Calu3 (cell line): ENCODE measurements at regions of chr3 and their contacts with region 1.

Region 1: DNA sequence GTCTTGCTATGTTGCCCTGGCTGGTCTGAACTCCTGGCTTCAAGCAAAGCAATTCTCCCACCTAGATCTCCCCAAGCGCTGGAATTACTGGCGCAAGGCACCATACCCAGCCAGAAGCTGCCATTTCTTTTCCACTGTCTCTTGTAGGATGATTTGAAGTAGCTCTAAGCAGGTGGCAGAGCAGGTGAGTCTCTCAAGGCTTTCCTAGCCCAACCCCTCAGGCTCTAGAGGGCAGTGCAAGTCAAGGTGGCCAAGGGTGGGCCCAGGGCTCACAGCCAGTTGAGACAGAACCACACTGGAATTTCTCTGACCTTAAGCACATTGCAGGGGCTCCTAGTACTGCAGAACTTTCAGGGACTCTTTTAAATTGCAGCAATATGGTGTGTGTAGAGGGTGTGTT is 15.6 kb upstream of the DAG1 start:
- DNase-seq: peak; percentile 75
- H3K4me3 Mint-ChIP-seq: no peak overlapping the region
- H3K27ac Mint-ChIP-seq: no peak overlapping the region
- H3K4me1 Mint-ChIP-seq: peaks cover 17% of the 10 kb centered on the region
- H3K27me3 Mint-ChIP-seq: no peaks in the 10 kb centered on the region
- CTCF ChIP-seq: peak; percentile 24

Region 2: DNA sequence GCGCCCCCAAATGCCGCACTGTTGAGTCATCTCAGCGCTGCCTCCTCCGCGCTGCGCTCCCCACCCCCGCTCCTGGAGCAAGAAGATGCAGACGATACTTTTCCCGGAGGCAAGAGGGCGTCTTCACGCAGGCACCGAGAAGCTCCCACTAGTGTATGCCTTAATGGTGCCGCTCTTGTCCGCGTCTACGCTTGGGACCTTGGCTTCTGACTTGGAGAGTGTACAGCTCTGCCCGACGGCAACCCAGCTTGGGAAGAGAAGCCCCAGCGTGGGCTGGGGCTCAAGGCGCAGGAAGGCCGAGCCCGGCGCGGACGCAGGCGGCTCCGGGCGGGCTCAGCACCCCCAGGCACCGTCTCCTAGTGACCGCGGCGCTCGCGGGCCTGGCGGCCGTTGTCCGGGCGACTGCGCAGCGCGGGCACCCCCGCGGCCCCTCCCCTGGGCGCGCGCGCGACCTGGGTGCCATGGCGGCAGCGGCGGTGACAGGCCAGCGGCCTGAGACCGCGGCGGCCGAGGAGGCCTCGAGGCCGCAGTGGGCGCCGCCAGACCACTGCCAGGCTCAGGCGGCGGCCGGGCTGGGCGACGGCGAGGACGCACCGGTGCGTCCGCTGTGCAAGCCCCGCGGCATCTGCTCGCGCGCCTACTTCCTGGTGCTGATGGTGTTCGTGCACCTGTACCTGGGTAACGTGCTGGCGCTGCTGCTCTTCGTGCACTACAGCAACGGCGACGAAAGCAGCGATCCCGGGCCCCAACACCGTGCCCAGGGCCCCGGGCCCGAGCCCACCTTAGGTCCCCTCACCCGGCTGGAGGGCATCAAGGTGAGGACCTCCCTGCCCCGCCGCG is 464.4 kb before region 1 on chr3 and contains the start of gene P4HTM:
- CTCF ChIA-PET with region 1: interaction called, 15 read pairs
- intact Hi-C with region 1: loop called (anchors 2 kb)
- DNase-seq: peak; percentile 84
- H3K4me3 Mint-ChIP-seq: peak within 1 kb of the TSS; percentile 96
- H3K27ac Mint-ChIP-seq: peak within 1 kb of the TSS; percentile 93
- H3K4me1 Mint-ChIP-seq: peaks cover 9% of the 10 kb centered on the region
- H3K27me3 Mint-ChIP-seq: no peaks in the 10 kb centered on the region
- CTCF ChIP-seq: no peak
- total RNA-seq, gene P4HTM: 63.0 and 72.0 TPM in 2 replicates

Region 3: GRCh38 chr3:49339945-49340800 is 114.3 kb before region 1 on chr3 and contains the start of gene USP4:
- CTCF ChIA-PET with region 1: interaction called, 33 read pairs
- intact Hi-C with region 1: loop called (anchors 1 kb)
- DNase-seq: peak; percentile 90
- H3K4me3 Mint-ChIP-seq: peak within 1 kb of the TSS; percentile 88
- H3K27ac Mint-ChIP-seq: peak within 1 kb of the TSS; percentile 84
- H3K4me1 Mint-ChIP-seq: peaks cover 6% of the 10 kb centered on the region
- H3K27me3 Mint-ChIP-seq: no peaks in the 10 kb centered on the region
- CTCF ChIP-seq: no peak
- total RNA-seq, gene USP4: 40.0 and 43.5 TPM in 2 replicates

Region 4: GRCh38 chr3:49411968-49412631 is 42.4 kb before region 1 on chr3 and contains the starts of genes RHOA and TCTA:
- CTCF ChIA-PET with region 1: interaction called, 20 read pairs
- intact Hi-C with region 1: loop called (anchors 1 kb)
- DNase-seq: peak; percentile 98
- H3K4me3 Mint-ChIP-seq: peak within 1 kb of the TSS; percentile 91
- H3K27ac Mint-ChIP-seq: peak within 1 kb of the TSS; percentile 100
- H3K4me1 Mint-ChIP-seq: peaks cover 35% of the 10 kb centered on the region
- H3K27me3 Mint-ChIP-seq: no peaks in the 10 kb centered on the region
- CTCF ChIP-seq: no peak
- total RNA-seq, gene RHOA: 313 and 352 TPM in 2 replicates
- total RNA-seq, gene TCTA: 33.6 and 35.6 TPM in 2 replicates

Region 5: GRCh38 chr3:49500732-49501609 is 46.5 kb after region 1 on chr3:
- CTCF ChIA-PET with region 1: interaction called, 11 read pairs
- intact Hi-C with region 1: no loop called
- DNase-seq: peak; percentile 74
- H3K4me3 Mint-ChIP-seq: peak overlapping the region; percentile 47
- H3K27ac Mint-ChIP-seq: peak overlapping the region; percentile 96
- H3K4me1 Mint-ChIP-seq: peaks cover 35% of the 10 kb centered on the region
- H3K27me3 Mint-ChIP-seq: no peaks in the 10 kb centered on the region
- CTCF ChIP-seq: no peak

Region 6: DNA sequence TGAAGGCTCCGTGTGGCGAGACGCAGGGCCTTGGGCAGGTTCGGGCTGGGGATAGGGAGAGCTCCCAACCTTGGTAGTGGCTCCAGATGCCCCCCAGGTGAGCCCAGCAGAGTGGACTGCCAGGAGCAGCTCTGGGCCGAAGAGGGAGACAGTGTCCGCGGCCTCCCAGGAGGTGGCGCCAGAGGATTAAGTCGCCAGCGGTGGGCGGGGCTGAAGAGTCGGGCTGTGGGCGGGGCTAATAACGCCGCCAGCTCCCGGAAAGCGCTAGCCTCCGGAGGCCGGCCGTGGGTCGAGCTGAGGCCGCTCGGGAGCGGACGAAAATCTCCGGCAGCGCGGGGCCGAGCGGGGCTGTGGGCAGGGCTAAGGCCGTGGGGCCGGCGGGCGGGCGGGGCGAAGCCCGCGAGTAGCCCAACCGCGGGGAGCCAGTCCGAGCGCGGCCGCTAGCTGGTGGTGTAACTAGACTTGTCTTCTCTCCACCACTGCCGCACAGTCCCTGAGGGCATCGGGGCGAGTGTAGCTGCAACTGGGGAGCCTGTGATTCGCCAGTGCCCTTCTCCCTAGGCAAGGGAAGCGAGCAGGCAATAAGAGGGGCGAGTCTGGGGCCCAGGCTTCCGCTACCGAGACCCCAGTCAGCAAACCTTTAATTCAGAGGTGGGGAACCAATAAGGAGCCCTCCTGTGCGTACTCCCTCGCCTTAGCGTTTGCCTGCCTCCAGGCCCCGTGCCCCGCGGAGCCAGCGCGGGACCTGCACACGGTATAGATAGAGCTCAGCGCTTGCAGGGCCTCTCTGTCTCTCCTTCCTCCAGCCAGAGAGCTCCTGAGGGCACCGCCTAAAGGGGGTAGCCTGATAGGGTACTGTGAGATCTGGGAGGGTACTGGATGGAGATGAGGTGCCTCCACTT is 85.5 kb after region 1 on chr3:
- CTCF ChIA-PET with region 1: interaction called, 14 read pairs
- intact Hi-C with region 1: no loop called
- DNase-seq: peak; percentile 95
- H3K4me3 Mint-ChIP-seq: peak overlapping the region; percentile 66
- H3K27ac Mint-ChIP-seq: no peak overlapping the region
- H3K4me1 Mint-ChIP-seq: no peaks in the 10 kb centered on the region
- H3K27me3 Mint-ChIP-seq: peaks cover 25% of the 10 kb centered on the region
- CTCF ChIP-seq: peak; percentile 64

Region 7: DNA sequence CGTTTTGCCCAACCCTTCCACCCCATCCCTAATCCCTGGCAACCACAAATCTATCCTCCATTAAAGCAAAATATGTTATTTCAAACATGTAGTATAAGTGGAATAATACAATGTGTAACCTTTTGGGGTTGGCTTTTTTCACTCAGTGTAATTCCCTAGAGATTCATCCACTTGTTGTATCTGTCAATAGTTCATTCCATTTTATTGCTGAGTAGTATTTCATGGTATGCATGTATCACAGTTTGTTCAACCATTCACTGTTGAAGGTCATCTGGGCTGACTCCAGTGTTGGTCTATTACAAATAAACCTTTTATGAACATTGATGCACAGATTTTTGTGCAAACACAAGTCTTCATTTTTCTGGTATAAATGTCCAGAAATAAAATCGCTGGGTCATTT is 138.6 kb after region 1 on chr3:
- CTCF ChIA-PET with region 1: no interaction called
- intact Hi-C with region 1: no loop called
- DNase-seq: no peak
- H3K4me3 Mint-ChIP-seq: no peak overlapping the region
- H3K27ac Mint-ChIP-seq: no peak overlapping the region
- H3K4me1 Mint-ChIP-seq: no peaks in the 10 kb centered on the region
- H3K27me3 Mint-ChIP-seq: no peaks in the 10 kb centered on the region
- CTCF ChIP-seq: no peak

Region 8: DNA sequence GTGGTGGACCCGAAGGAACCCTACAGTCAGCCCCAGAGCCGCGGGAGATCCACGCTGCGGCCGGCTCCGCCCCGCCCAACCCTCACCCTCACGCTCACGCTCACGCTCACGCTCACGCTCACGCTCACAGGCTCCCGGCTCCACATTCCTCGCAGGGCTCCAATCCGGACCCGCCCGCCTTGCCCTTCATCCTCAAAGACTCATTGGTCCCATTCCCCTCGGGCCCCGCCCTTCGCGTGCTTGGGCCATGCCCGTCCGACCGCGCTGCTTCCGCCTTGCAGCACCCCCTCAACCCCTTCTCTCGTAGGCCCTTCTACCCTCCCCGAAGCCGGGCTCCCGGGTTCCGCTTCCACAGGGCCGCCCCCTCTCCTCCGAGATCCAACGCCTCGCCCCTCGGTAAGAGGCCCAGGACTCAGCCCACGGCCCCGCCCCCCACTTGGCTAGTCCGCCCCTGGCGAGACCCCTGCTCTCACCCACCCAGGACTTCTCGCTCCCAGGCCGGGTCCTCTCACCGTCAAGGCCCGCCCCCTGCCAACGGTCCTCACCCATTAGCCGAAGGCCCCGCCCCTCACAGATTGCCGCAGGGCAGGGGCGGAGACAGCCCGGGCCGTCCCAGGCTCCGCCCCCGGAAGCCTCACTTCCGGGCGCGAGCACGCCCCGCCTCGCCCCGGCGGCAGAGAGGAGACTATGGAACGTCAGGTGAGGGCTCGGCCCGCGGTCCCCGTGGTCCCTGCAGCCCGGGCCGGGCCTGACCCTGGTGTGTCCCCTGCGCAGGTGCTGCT is 219.4 kb after region 1 on chr3 and contains the start of gene APEH:
- CTCF ChIA-PET with region 1: interaction called, 7 read pairs
- intact Hi-C with region 1: loop called (anchors 2 kb)
- DNase-seq: peak; percentile 99
- H3K4me3 Mint-ChIP-seq: peak within 1 kb of the TSS; percentile 97
- H3K27ac Mint-ChIP-seq: peak within 1 kb of the TSS; percentile 95
- H3K4me1 Mint-ChIP-seq: peaks cover 32% of the 10 kb centered on the region
- H3K27me3 Mint-ChIP-seq: no peaks in the 10 kb centered on the region
- CTCF ChIP-seq: no peak
- total RNA-seq, gene APEH: 187 and 207 TPM in 2 replicates